Endothelial cell of umbilical vein (primary cell): ENCODE measurements at regions of chr18 and their contacts with region 1.

Region 1: DNA sequence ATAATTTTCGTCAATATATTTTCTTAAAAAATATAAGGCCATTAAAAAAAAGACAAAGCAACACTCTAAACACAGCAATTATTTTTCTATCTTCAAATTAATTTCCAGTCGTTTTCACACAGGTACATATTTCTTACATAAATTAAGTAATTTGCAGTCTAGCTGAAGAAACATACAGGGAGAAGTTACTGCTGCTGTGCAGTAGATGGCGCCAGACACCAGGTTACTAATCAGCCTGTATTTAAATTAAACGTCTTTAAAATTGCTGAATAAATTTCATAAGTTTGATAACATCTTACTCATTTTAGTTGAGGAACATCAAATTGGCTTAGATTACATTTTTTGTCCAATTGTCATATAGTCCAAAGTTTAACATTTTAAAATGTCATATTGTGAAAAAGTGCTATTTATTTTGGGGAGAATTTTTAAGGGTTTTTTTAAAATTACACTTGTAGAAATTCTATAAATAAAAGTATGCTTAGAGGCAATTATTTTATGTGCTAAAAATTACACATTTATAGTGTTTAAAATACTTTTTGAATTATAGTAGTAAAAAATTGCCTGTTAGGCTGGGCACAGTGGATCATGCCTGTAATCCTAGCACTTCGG is 88.4 kb downstream of the PMAIP1 start:
- DNase-seq: peak; percentile 68
- H3K4me3 ChIP-seq: no peak overlapping the region
- H3K27ac ChIP-seq: no peak overlapping the region
- H3K4me1 ChIP-seq: no peaks in the 10 kb centered on the region
- H3K27me3 ChIP-seq: peaks cover 0 to 1% of the 10 kb centered on the region in 2 experiments
- CTCF ChIP-seq: peak; percentile 58 to 67
- POLR2A ChIP-seq: no peak

Region 2: GRCh38 chr18:59459369-59460079 is 528.7 kb before region 1 on chr18:
- CTCF ChIA-PET with region 1: interaction called, 10 read pairs
- POLR2A ChIA-PET with region 1: no interaction called
- dilution Hi-C with region 1: no loop called
- intact Hi-C with region 1: no loop called
- DNase-seq: peak; percentile 28
- H3K4me3 ChIP-seq: no peak overlapping the region
- H3K27ac ChIP-seq: no peak overlapping the region
- H3K4me1 ChIP-seq: no peaks in the 10 kb centered on the region
- H3K27me3 ChIP-seq: no peaks in the 10 kb centered on the region
- CTCF ChIP-seq: peak; percentile 17 to 40
- POLR2A ChIP-seq: no peak

Region 3: GRCh38 chr18:59899298-59900221 is 88.6 kb before region 1 on chr18 and contains the start of gene PMAIP1:
- CTCF ChIA-PET with region 1: interaction called, 16 read pairs
- POLR2A ChIA-PET with region 1: interaction called, 4 read pairs
- dilution Hi-C with region 1: no loop called
- intact Hi-C with region 1: no loop called
- DNase-seq: peak; percentile 91
- H3K4me3 ChIP-seq: peak within 1 kb of the TSS; percentile 58 to 88 (median 76)
- H3K27ac ChIP-seq: peak within 1 kb of the TSS; percentile 75
- H3K4me1 ChIP-seq: peaks cover 27% of the 10 kb centered on the region
- H3K27me3 ChIP-seq: peaks cover 1 to 9% of the 10 kb centered on the region in 2 experiments
- CTCF ChIP-seq: no peak
- POLR2A ChIP-seq: peak; percentile 99
- total RNA-seq, gene PMAIP1: 11.9 and 13.5 TPM in 2 replicates

Region 4: DNA sequence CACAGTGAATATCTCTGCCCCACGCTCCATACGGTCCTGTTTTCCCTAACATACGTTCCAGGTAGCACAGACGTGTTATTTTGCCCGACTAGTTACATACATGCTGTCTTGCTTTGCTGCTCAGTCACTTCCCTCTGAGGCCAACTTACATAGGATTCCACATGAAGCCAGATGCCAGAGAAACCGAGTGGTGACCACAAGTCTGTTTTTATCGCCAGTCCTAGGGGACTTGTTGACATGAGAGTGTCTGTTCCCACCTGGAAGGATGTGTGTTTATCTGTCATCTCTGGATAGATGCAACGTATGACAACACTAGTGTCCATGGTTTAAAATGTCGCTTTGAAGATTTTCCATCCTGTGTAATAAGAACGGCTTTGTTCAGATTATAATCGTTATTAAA is 55.8 kb before region 1 on chr18:
- CTCF ChIA-PET with region 1: interaction called, 10 read pairs
- POLR2A ChIA-PET with region 1: no interaction called
- dilution Hi-C with region 1: no loop called
- intact Hi-C with region 1: no loop called
- DNase-seq: no peak
- H3K4me3 ChIP-seq: no peak overlapping the region
- H3K27ac ChIP-seq: no peak overlapping the region
- H3K4me1 ChIP-seq: no peaks in the 10 kb centered on the region
- H3K27me3 ChIP-seq: peaks cover 0 to 2% of the 10 kb centered on the region in 2 experiments
- CTCF ChIP-seq: no peak
- POLR2A ChIP-seq: no peak

Region 5: GRCh38 chr18:59961086-59961485 is 27.1 kb before region 1 on chr18:
- CTCF ChIA-PET with region 1: interaction called, 14 read pairs
- POLR2A ChIA-PET with region 1: no interaction called
- dilution Hi-C with region 1: no loop called
- intact Hi-C with region 1: no loop called
- DNase-seq: no peak
- H3K4me3 ChIP-seq: no peak overlapping the region
- H3K27ac ChIP-seq: no peak overlapping the region
- H3K4me1 ChIP-seq: no peaks in the 10 kb centered on the region
- H3K27me3 ChIP-seq: peaks cover 8% of the 10 kb centered on the region in 2 experiments
- CTCF ChIP-seq: no peak
- POLR2A ChIP-seq: no peak

Region 6: DNA sequence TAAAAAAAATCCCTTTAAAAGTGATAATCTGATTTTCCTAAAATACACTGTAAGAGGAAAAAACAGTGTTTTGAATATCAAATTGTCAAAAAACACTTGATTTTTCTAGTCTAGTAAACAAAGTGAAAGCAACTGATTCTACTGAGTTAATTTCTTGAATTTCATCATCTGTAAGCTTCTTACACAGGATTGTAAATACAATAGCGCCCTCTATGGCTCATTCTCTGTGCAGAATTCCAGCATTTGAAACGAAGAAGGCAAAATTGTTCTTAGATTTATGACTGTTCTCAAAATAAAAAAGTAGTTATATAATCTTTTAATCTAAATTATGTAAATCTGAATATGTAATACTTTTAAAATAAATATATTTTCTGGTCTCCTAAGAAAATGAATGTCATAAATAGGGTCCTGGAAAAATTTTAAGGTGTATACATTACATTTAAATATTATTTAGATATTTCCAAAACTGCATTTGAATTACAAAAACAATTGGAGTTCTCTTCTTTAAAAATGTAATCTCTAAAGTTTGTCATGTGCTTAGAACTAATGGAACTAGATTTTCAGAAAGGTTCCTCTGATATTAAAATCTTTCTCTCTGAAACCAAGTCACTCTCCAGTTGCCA is 561.2 kb after region 1 on chr18:
- CTCF ChIA-PET with region 1: interaction called, 82 read pairs
- POLR2A ChIA-PET with region 1: no interaction called
- dilution Hi-C with region 1: no loop called
- intact Hi-C with region 1: loop called (anchors 1 kb)
- DNase-seq: peak; percentile 64
- H3K4me3 ChIP-seq: no peak overlapping the region
- H3K27ac ChIP-seq: no peak overlapping the region
- H3K4me1 ChIP-seq: no peaks in the 10 kb centered on the region
- H3K27me3 ChIP-seq: no peaks in the 10 kb centered on the region
- CTCF ChIP-seq: peak; percentile 53 to 57
- POLR2A ChIP-seq: no peak

Region 7: GRCh38 chr18:60684843-60685513 is 696.8 kb after region 1 on chr18:
- CTCF ChIA-PET with region 1: interaction called, 5 read pairs
- POLR2A ChIA-PET with region 1: no interaction called
- dilution Hi-C with region 1: no loop called
- intact Hi-C with region 1: loop called (anchors 5 kb)
- DNase-seq: peak; percentile 57
- H3K4me3 ChIP-seq: no peak overlapping the region
- H3K27ac ChIP-seq: no peak overlapping the region
- H3K4me1 ChIP-seq: no peaks in the 10 kb centered on the region
- H3K27me3 ChIP-seq: peaks cover 0 to 1% of the 10 kb centered on the region in 2 experiments
- CTCF ChIP-seq: peak; percentile 35 to 37
- POLR2A ChIP-seq: no peak